Heart right ventricle (tissue), 16 donors: ENCODE measurements at regions of chr4 and their contacts with region 1.

Region 1: GRCh38 chr4:106502106-106502699 is 133.6 kb upstream of the GIMD1 start:
- DNase-seq: peak; percentile 37 to 42
- ATAC-seq: peak in 1 of 8 donors; percentile 67
- H3K4me3 ChIP-seq: no peak overlapping the region
- H3K27ac ChIP-seq: no peak overlapping the region
- H3K4me1 ChIP-seq: peaks cover 0 to 6% (median 0%) of the 10 kb centered on the region in 9 donors
- H3K27me3 ChIP-seq: peaks cover 0 to 7% (median 0%) of the 10 kb centered on the region in 7 donors
- CTCF ChIP-seq: peak; percentile 29 to 76 (median 65)

Region 2: GRCh38 chr4:106266201-106266600 is 236.0 kb before region 1 on chr4:
- intact Hi-C with region 1: loop called in 5 of 10 experiments (anchors 5 to 10 kb)
- DNase-seq: no peak
- ATAC-seq: no peak
- H3K4me3 ChIP-seq: no peak overlapping the region
- H3K27ac ChIP-seq: no peak overlapping the region
- H3K4me1 ChIP-seq: peaks cover 0 to 22% (median 9%) of the 10 kb centered on the region in 9 donors
- H3K27me3 ChIP-seq: no peaks in the 10 kb centered on the region
- CTCF ChIP-seq: peak in 7 of 9 donors; percentile 36 to 62 (median 46)

Region 3: DNA sequence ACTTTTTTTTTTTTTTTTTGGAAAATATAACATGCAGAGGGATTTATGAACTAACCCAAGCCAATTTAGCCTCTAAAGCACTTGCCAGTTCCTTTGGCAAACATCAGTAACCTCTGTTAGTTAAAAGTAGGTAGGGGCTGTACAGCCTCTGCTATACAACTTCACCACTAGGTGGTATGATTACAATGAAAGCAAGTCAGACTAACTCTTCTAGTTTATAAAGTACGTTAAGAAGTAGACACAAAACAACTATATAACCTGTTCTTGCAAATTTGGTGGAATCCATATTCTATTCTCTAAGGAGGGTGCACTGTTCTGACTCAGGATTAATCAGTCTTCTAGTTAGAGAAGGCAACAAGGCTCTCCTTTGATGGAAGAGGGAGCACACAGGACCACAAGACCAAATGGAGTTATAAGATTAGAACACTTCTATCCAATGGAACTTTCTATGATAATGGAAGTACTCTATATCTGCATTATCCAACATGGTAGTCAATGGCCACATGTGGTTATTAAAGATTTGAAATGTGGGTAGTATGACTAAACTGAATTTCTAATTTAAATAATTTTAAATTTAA is 173.1 kb before region 1 on chr4:
- intact Hi-C with region 1: loop called in 1 of 10 experiments (anchors 5 kb)
- DNase-seq: no peak
- ATAC-seq: peak in 4 of 8 donors; percentile 44 to 59 (median 55)
- H3K4me3 ChIP-seq: no peak overlapping the region
- H3K27ac ChIP-seq: no peak overlapping the region
- H3K4me1 ChIP-seq: peaks cover 0 to 5% (median 0%) of the 10 kb centered on the region in 9 donors
- H3K27me3 ChIP-seq: no peaks in the 10 kb centered on the region
- CTCF ChIP-seq: peak; percentile 20 to 77 (median 61)